CD4-positive, alpha-beta memory T cell (primary cell): ENCODE measurements at regions of chr7 and their contacts with region 1.

Region 1: DNA sequence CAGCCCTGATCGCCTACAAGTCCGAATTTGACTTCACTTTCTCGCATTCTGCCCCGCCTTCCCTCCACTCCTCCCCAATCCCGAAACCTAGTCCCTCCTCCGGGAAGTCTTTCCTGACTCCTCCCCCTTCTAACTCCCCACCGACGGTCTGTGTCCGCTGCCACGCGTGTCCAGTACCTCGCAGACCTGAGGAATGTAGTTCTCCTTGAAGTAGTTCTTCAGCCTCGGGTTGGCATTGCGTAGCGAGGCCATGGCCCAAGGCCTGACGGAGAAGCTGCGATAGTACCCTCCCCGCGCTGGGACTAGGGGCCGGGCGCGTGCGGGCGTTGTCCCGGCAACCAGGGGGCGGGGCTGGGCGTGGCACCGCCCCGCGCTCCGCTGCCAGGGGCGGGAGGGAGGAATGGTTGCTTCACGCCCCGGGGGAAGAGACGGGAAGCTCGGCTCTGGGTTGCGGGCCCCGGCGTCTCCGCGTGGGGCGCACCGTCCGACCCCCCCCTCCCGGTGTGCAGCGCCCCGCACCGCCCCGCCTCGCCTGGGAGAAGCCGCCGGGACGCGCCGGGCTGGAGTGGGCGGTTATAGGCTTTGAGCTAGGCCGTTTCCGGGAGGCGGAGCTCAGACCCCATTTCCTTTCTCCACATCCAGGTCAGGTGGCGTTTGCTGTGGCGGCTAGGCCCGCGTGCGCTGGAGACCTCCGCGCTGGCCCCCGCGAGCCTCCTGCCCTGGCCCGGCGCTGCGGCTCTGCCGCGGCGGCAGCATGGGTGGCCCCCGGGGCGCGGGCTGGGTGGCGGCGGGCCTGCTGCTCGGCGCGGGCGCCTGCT is at the starts of genes ARMC10 and FBXL13:
- DNase-seq: peak; percentile 89 to 91 (median 90)
- H3K4me3 ChIP-seq: peak within 1 kb of the TSS; percentile 75 to 79
- H3K4me3 Mint-ChIP-seq: peak within 1 kb of the TSS; percentile 94 to 99 (median 96)
- H3K27ac ChIP-seq: peak within 1 kb of the TSS; percentile 77
- H3K27ac Mint-ChIP-seq: peak within 1 kb of the TSS; percentile 92 to 99 (median 98)
- H3K4me1 ChIP-seq: peaks cover 35% of the 10 kb centered on the region
- H3K4me1 Mint-ChIP-seq: peaks cover 29 to 45% (median 37%) of the 10 kb centered on the region in 4 donors
- H3K27me3 ChIP-seq: no peaks in the 10 kb centered on the region
- H3K27me3 Mint-ChIP-seq: no peaks in the 10 kb centered on the region
- total RNA-seq, gene ARMC10: 28.4 to 28.8 TPM
- total RNA-seq, gene FBXL13: 0.49 to 2.2 TPM

Region 2: DNA sequence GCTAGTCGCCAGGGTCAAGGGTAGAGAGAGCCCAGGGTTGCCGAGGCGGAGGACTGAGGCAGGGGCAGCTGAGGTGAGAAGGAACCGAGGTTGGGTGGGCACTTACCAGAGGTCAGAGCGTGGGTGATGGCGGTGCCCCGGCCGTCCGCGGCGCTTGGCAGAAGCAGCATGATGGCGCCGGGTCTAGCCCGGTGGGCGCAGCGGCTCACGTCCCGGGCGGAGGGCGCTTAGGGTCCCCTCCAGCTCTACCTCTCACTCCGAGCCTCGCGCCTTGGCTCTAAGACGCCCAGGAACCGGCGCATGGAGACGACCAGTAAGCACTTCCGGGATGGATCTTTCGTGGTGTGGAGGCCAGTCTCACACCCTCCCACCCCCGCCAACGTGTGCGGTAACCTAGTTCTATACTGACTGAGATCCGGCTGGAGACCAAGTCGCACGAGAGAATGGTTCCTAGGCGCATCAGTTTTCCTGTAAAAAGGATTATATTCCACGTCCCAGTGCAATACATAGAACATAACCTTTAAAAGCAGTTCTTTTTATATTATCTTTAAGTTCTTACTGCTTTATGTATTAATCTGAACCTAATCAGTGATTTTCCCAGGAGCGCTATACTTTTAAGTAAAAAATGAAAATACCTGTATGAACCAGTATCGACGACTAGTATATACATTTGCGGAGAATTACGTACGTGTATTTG is 269.9 kb after region 1 on chr7 and contains the start of gene DNAJC2:
- CTCF ChIA-PET with region 1: no interaction called
- POLR2A ChIA-PET with region 1: interaction called, 5 read pairs
- intact Hi-C with region 1: loop called (anchors 1 kb)
- DNase-seq: peak; percentile 85 to 91 (median 87)
- H3K4me3 ChIP-seq: peak within 1 kb of the TSS; percentile 70
- H3K4me3 Mint-ChIP-seq: peak within 1 kb of the TSS; percentile 98 to 100 (median 99)
- H3K27ac ChIP-seq: peak within 1 kb of the TSS; percentile 82
- H3K27ac Mint-ChIP-seq: peak within 1 kb of the TSS; percentile 96 to 99 (median 98)
- H3K4me1 ChIP-seq: peaks cover 63% of the 10 kb centered on the region
- H3K4me1 Mint-ChIP-seq: peaks cover 37 to 83% (median 63%) of the 10 kb centered on the region in 4 donors
- H3K27me3 ChIP-seq: no peaks in the 10 kb centered on the region
- H3K27me3 Mint-ChIP-seq: no peaks in the 10 kb centered on the region
- total RNA-seq, gene DNAJC2: 36.0 to 40.5 TPM